AG04450 (cell line): ENCODE measurements at regions of chr7 and their contacts with region 1.

Region 1: GRCh38 chr7:2451171-2452073 is 24.8 kb downstream of the GRIFIN start:
- DNase-seq: no peak
- H3K4me3 ChIP-seq: peak overlapping the region; percentile 34
- H3K27ac ChIP-seq: no peak overlapping the region
- H3K27me3 ChIP-seq: no peaks in the 10 kb centered on the region
- CTCF ChIP-seq: peak; percentile 89

Region 2: DNA sequence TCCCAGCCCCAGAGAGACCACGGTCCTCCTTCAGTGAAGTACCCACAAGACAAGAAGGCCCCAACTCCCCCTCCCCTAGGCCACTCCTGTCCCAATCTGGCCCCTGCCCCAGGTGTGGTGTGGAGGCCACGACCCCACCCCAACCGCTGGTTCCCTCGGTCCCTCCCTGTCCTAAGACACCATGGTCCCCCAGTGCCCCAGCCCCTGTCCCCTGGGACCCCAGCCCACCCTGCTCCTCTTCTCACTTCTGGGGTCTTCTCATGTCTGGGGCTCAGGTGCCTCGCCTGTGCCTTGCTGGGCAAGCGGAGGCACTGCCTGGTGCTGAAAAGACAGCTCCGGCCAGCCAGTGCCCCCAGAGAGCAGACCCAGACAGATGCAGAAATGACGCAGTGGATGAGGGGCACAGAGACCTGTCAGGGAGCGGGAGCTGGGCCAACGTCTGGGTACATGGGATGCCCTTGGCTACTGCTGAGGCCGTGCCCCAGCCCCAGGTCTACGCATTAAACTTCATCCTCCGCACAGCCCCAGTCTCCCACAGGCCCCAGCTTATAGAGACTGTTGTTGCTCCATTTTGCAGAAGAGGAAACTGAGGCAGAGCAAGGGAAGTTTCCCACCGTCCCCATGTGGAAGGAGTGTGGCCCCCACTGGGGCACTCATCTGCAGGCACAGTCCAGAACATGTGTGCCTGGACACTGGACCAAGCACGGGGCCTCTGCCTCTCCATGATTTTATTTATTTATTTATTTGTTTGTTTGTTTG is 10.0 kb after region 1 on chr7:
- CTCF ChIA-PET with region 1: interaction called, 11 read pairs
- POLR2A ChIA-PET with region 1: no interaction called
- DNase-seq: no peak
- H3K4me3 ChIP-seq: no peak overlapping the region
- H3K27ac ChIP-seq: no peak overlapping the region
- H3K27me3 ChIP-seq: no peaks in the 10 kb centered on the region
- CTCF ChIP-seq: no peak

Region 3: GRCh38 chr7:2471396-2471795 is 20.0 kb after region 1 on chr7:
- CTCF ChIA-PET with region 1: interaction called, 75 read pairs
- POLR2A ChIA-PET with region 1: no interaction called
- DNase-seq: no peak
- H3K4me3 ChIP-seq: no peak overlapping the region
- H3K27ac ChIP-seq: peak overlapping the region; percentile 57
- H3K27me3 ChIP-seq: no peaks in the 10 kb centered on the region
- CTCF ChIP-seq: no peak

Region 4: DNA sequence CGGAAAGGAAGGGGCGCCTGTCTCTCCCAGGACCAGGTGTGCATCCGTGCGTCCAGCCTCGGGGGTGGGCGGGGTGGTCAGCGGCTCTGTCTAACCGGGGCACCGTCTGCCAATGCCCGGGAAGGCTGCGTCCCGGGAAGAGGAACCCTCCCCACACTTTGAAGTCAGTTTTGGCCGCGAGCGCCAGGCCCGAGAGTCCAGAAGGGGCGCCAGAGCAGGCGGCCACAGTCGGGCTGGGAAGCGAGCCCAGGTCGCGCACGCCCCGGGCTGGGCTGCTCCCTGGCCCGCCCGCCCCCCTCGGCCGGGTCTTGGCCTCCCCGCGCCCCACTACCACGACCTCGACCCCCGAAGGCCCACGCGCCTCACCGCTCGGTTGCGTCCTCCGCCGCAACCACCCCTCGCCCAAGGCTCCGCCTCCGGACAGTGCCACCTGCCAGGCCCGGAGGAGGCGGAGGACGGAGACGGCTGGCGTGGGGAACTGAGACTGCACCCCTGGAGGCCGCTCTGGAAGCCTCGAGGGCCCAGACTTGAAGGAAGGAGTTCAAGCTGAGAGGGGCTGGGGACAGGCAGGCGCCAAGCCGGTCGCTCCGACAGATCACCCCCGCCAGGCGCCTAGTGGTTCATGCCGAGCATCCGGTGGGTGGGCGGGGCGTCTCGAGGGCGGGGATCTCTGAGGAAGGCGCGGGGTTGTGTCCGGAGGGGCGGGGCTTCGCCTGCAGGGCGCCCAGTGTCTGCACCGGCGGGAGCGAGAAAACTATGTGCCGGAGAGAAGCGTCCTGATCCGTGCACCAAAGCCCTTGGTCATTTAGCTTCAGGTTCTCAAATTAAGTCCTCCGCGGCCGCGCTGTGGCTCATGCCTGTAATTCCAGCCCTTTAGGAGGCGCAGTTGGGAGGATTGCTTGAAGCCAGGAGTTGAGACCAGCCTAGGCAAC is 104.0 kb after region 1 on chr7 and contains the start of gene BRAT1:
- CTCF ChIA-PET with region 1: interaction called, 12 read pairs
- POLR2A ChIA-PET with region 1: no interaction called
- DNase-seq: peak; percentile 81
- H3K4me3 ChIP-seq: peak within 1 kb of the TSS; percentile 77
- H3K27ac ChIP-seq: peak within 1 kb of the TSS; percentile 98
- H3K27me3 ChIP-seq: no peaks in the 10 kb centered on the region
- CTCF ChIP-seq: peak; percentile 29; the same call in 1 of the 2 replicates
- polyA plus RNA-seq, gene BRAT1: 6.2 and 9.8 TPM in 2 replicates

Region 5: GRCh38 chr7:2680792-2681490 is 229.5 kb after region 1 on chr7:
- CTCF ChIA-PET with region 1: interaction called, 15 read pairs
- POLR2A ChIA-PET with region 1: no interaction called
- DNase-seq: no peak
- H3K4me3 ChIP-seq: no peak overlapping the region
- H3K27ac ChIP-seq: no peak overlapping the region
- H3K27me3 ChIP-seq: peaks cover 2% of the 10 kb centered on the region
- CTCF ChIP-seq: peak; percentile 70

Region 6: GRCh38 chr7:2709553-2710285 is 258.3 kb after region 1 on chr7:
- CTCF ChIA-PET with region 1: interaction called, 13 read pairs
- POLR2A ChIA-PET with region 1: no interaction called
- DNase-seq: no peak
- H3K4me3 ChIP-seq: no peak overlapping the region
- H3K27ac ChIP-seq: no peak overlapping the region
- H3K27me3 ChIP-seq: no peaks in the 10 kb centered on the region
- CTCF ChIP-seq: peak; percentile 78